Endothelial cell of umbilical vein (primary cell): ENCODE measurements at regions of chr16 and their contacts with region 1.

Region 1: DNA sequence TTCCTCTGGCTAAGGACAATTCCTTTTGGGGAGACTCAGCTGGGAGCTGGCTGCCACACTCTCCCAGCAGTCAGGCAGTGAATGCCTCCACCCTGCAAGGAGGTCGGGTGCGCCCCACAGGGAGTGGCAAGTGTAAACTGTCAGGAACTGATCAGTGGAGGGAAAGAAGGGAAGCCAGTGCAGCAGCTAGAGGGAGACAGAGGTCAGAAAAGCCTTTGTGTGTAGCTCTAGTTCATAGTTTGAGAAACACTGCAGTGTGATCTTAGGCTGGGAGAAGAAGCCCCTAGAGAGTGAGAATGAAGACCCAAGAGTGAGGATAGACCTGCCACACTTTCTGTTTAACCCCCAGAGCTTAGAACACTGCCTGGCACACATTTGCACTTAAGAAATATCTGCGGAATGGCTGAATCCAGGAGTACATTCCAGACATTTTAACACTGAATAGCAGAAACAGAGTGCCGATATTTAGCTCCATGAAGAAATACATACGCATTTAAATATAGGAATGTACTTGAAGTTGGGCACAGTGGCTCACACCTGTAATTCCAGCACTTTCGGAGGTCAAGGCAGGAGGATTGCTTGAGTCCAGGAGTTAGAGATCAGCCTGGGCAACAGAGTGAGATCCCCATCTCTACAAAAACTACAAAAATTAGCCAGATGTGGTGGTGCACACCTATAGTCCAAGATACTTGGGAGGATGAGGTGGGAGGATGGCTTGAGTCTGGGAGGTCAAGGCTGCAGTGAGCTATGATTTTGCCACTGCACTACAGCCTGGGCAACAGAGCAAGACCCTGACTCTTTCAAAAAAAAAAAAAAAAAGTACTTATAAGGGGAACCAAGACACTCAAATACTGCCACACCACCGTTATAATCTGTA is 11.1 kb upstream of the SLC5A11 start:
- DNase-seq: peak; percentile 52
- H3K4me3 ChIP-seq: no peak overlapping the region
- H3K27ac ChIP-seq: no peak overlapping the region
- H3K4me1 ChIP-seq: peaks cover 12% of the 10 kb centered on the region
- H3K27me3 ChIP-seq: no peaks in the 10 kb centered on the region
- CTCF ChIP-seq: peak; percentile 44 to 64
- POLR2A ChIP-seq: no peak

Region 2: GRCh38 chr16:24815022-24815421 is 19.7 kb before region 1 on chr16:
- CTCF ChIA-PET with region 1: no interaction called
- POLR2A ChIA-PET with region 1: no interaction called
- dilution Hi-C with region 1: no loop called
- intact Hi-C with region 1: no loop called
- DNase-seq: no peak
- H3K4me3 ChIP-seq: no peak overlapping the region
- H3K27ac ChIP-seq: no peak overlapping the region
- H3K4me1 ChIP-seq: peaks cover 4% of the 10 kb centered on the region
- H3K27me3 ChIP-seq: no peaks in the 10 kb centered on the region
- CTCF ChIP-seq: no peak
- POLR2A ChIP-seq: no peak

Region 3: GRCh38 chr16:24850289-24850938 is 15.7 kb after region 1 on chr16:
- CTCF ChIA-PET with region 1: interaction called, 10 read pairs
- POLR2A ChIA-PET with region 1: no interaction called
- dilution Hi-C with region 1: no loop called
- intact Hi-C with region 1: no loop called
- DNase-seq: no peak
- H3K4me3 ChIP-seq: no peak overlapping the region
- H3K27ac ChIP-seq: no peak overlapping the region
- H3K4me1 ChIP-seq: peaks cover 36% of the 10 kb centered on the region
- H3K27me3 ChIP-seq: no peaks in the 10 kb centered on the region
- CTCF ChIP-seq: no peak
- POLR2A ChIP-seq: no peak

Region 4: GRCh38 chr16:24906199-24907020 is 71.7 kb after region 1 on chr16:
- CTCF ChIA-PET with region 1: interaction called, 20 read pairs
- POLR2A ChIA-PET with region 1: no interaction called
- dilution Hi-C with region 1: no loop called
- intact Hi-C with region 1: no loop called
- DNase-seq: peak; percentile 51
- H3K4me3 ChIP-seq: no peak overlapping the region
- H3K27ac ChIP-seq: no peak overlapping the region
- H3K4me1 ChIP-seq: no peaks in the 10 kb centered on the region
- H3K27me3 ChIP-seq: no peaks in the 10 kb centered on the region
- CTCF ChIP-seq: peak; percentile 27 to 43
- POLR2A ChIP-seq: no peak

Region 5: GRCh38 chr16:24995033-24995432 is 160.3 kb after region 1 on chr16:
- CTCF ChIA-PET with region 1: no interaction called
- POLR2A ChIA-PET with region 1: no interaction called
- dilution Hi-C with region 1: no loop called
- intact Hi-C with region 1: no loop called
- DNase-seq: no peak
- H3K4me3 ChIP-seq: no peak overlapping the region
- H3K27ac ChIP-seq: peak overlapping the region; percentile 52
- H3K4me1 ChIP-seq: peaks cover 45% of the 10 kb centered on the region
- H3K27me3 ChIP-seq: no peaks in the 10 kb centered on the region
- CTCF ChIP-seq: no peak
- POLR2A ChIP-seq: no peak

Region 6: GRCh38 chr16:25155553-25156460 is 321.1 kb after region 1 on chr16:
- CTCF ChIA-PET with region 1: no interaction called
- POLR2A ChIA-PET with region 1: no interaction called
- dilution Hi-C with region 1: no loop called
- intact Hi-C with region 1: no loop called
- DNase-seq: peak; percentile 29
- H3K4me3 ChIP-seq: no peak overlapping the region
- H3K27ac ChIP-seq: no peak overlapping the region
- H3K4me1 ChIP-seq: no peaks in the 10 kb centered on the region
- H3K27me3 ChIP-seq: no peaks in the 10 kb centered on the region
- CTCF ChIP-seq: no peak
- POLR2A ChIP-seq: no peak